Gastrocnemius medialis (tissue), 4 donors: ENCODE measurements at regions of chr11 and their contacts with region 1.

Region 1: DNA sequence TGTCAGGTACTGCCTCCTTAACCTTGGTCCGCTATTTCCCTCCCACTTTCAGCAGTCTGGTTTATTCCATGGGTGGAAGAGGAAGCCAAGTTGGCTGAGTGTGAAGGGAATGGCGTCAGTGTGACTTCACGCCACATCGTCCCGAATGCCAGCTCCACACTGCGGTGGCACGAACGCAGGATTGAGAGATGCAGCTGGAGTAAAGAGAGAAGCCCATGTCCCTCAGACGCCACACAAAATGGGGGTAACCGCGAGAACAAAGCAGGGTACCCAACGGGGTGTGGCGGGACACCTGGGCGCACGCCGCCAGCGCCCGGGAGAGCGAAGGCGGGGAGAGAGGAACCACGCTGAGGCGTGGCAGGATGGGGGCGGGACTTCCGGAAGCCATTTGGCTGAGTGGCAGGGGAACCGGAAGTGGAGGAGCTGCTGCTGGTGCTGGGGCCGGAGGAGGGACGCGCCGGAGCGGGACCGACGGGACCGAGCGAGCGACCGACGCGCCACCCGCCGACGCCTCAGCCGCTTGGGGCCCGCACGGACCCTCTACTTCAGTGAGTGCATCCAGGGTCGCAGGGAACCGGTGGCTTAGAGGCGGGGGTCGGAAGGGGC is at the start of gene PAFAH1B2:
- DNase-seq: peak; percentile 93 to 94
- ATAC-seq: peak; percentile 94 to 96
- H3K4me3 ChIP-seq: peak within 1 kb of the TSS; percentile 77 to 92 (median 82)
- H3K27ac ChIP-seq: peak within 1 kb of the TSS; percentile 84 to 97 (median 92)
- H3K4me1 ChIP-seq: peaks cover 30 to 33% of the 10 kb centered on the region in 2 donors
- H3K27me3 ChIP-seq: peaks cover 0 to 4% (median 0%) of the 10 kb centered on the region in 3 donors
- CTCF ChIP-seq: no peak
- POLR2A ChIP-seq: peak; percentile 87
- total RNA-seq, gene PAFAH1B2: 25.8 to 52.3 (median 35.2) TPM

Region 2: DNA sequence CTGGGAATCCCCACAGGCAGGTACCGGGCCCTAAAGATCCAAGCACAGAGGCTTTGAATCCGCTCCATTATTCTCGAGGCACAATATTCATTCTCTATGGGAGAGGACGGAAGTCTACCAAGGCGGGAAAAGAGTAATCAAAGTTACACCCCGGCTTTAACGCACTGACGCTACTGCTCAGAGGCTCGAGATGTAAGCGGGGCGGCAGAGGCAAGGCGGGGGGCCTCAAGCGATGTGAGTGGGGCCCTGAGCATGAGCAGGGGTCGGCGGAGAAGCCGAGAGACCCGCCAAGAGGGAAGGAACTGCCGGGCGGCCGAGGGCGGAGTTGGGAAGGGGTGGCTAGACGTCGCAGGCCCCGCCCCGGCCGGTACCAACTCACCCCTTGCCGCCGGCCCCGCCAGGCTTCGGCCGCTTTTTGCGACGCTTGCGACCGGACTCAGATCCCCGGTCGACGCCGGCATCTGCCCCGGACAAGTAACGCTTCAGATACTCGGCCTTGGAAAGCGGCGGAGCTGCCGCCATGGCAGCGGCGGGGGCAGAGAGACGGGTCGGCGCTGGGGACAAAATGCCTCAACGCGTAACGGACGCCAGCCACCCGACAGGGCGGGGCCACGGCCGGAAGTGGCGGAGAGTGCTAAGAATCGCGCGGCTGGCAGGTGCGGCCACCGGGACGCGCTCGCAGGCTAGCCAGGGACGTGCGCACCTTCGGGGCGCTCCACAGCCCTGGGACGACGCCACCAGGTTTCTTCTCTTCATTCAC is 371.4 kb before region 1 on chr11 and contains the start of gene BUD13:
- in situ Hi-C with region 1: no loop called
- intact Hi-C with region 1: loop called (anchors 1 kb)
- DNase-seq: peak; percentile 80 to 84
- ATAC-seq: peak; percentile 90 to 95
- H3K4me3 ChIP-seq: peak within 1 kb of the TSS; percentile 71 to 98 (median 89)
- H3K27ac ChIP-seq: peak within 1 kb of the TSS; percentile 91 to 96 (median 95)
- H3K4me1 ChIP-seq: peaks cover 21 to 24% of the 10 kb centered on the region in 2 donors
- H3K27me3 ChIP-seq: no peaks in the 10 kb centered on the region
- CTCF ChIP-seq: no peak
- POLR2A ChIP-seq: peak; percentile 36 to 68
- total RNA-seq, gene BUD13: 9.0 to 14.1 (median 12.3) TPM

Region 3: GRCh38 chr11:116980136-116980793 is 163.7 kb before region 1 on chr11:
- in situ Hi-C with region 1: no loop called
- intact Hi-C with region 1: no loop called
- DNase-seq: no peak
- ATAC-seq: no peak
- H3K4me3 ChIP-seq: no peak overlapping the region
- H3K27ac ChIP-seq: no peak overlapping the region
- H3K4me1 ChIP-seq: peaks cover 22 to 31% of the 10 kb centered on the region in 2 donors
- H3K27me3 ChIP-seq: no peaks in the 10 kb centered on the region
- CTCF ChIP-seq: no peak
- POLR2A ChIP-seq: no peak

Region 4: GRCh38 chr11:117171404-117172061 is 27.6 kb after region 1 on chr11:
- in situ Hi-C with region 1: no loop called
- intact Hi-C with region 1: loop called (anchors 2 kb)
- DNase-seq: no peak
- ATAC-seq: peak in 1 of 2 donors; percentile 37
- H3K4me3 ChIP-seq: no peak overlapping the region
- H3K27ac ChIP-seq: peak overlapping the region; percentile 57 to 90 (median 76)
- H3K4me1 ChIP-seq: peaks cover 38 to 48% of the 10 kb centered on the region in 2 donors
- H3K27me3 ChIP-seq: no peaks in the 10 kb centered on the region
- CTCF ChIP-seq: no peak
- POLR2A ChIP-seq: no peak

Region 5: DNA sequence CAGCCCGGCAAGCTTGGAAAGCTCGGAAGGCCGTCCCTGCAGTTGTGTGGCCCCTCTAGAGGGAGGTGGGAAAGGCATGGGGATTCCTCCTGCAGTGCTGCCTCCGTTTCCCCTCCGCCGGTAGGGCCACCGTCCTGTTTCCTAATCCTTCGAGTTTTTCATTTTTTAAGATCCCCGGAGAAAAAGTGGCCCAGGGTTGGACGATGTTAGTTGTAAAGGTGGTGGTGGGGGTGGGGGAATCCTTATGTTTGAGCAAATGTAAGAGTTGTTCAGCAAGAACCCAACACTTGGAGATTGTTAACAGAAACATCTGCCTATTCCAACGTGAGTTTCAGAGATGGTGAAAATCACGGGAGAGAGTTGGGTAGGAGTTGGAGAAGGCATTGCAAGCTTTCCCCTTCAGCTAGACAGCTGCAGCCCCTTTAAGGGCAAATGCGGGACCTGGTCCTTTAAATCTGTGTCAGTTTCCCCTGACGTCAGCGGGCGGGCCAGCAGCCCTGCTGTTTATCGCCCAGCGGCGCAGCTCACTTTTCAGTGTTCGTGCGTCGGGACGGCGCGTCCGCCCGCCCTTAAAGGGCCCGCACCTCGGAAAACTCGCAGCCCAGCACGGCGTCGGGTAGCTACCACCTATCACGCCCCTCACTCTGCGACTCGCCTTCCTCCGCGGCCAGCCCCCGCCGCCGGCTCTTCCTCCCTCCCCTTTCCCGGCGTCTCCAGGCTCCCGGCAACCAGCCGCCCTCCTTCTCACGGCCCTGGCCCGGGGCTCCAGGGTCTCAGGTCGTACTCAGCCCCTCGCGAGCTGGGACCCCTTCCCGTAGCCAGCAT is 34.4 kb after region 1 on chr11 and contains the start of gene SIDT2:
- in situ Hi-C with region 1: no loop called
- intact Hi-C with region 1: loop called (anchors 1 kb)
- DNase-seq: peak; percentile 91 to 93
- ATAC-seq: peak; percentile 81 to 90
- H3K4me3 ChIP-seq: peak within 1 kb of the TSS; percentile 62 to 98 (median 74)
- H3K27ac ChIP-seq: peak within 1 kb of the TSS; percentile 88 to 99 (median 89)
- H3K4me1 ChIP-seq: peaks cover 26 to 33% of the 10 kb centered on the region in 2 donors
- H3K27me3 ChIP-seq: no peaks in the 10 kb centered on the region
- CTCF ChIP-seq: peak in 1 of 5 experiments; percentile 26
- POLR2A ChIP-seq: peak; percentile 84 to 95
- total RNA-seq, gene SIDT2: 14.3 to 33.9 (median 17.7) TPM